A673 (cell line): ENCODE measurements at regions of chr3 and their contacts with region 1.

Region 1: DNA sequence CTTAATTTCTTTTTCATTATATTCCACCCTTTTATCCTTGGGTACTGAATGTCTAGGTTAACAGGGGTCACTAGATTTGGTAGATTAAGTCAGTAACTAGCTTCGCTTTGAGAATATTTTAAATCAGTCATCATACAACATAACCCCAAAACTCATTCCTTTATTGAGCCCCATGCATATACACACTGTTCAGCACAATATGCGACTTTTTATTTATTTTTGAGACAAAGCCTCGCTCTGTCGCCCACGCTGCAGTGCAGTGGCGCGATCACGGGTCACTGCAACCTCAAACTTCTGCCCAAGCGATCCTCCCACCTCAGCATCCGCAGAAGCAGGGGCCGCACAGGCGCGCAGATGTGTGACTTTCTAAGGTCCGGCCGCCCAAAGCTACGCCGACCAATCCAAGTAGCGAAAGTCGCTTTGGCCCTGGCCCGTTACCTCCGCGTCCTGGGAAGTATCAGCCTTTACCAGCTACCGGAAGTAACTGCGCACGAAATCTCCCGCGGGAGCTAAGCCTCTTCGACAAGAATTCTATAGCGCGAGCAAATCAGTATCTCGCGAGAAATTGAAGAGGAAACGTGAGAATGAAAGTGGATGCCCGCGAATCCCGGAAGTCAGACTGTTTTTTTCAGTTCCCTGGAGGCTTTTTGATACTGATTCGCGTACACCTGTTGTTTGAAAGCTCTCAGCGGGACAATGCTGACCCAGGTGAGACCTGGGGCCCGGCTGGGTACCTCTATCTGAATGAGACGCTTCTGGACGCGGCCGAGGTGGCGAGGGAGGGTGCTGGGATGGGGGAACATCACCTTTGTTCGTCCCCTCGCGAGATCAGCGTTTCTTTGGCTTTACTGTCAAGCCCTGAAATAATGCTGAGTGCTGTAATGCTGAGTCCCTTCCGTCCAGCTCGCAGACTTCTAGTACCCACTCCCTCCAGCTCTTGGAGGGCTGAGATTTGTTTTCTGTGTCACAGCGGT is at the starts of genes DHFR2 and NSUN3:
- DNase-seq: peak; percentile 98
- H3K4me3 ChIP-seq: peak within 1 kb of the TSS; percentile 84
- H3K27ac ChIP-seq: peak within 1 kb of the TSS; percentile 97
- H3K4me1 ChIP-seq: peaks cover 14% of the 10 kb centered on the region
- H3K27me3 ChIP-seq: no peaks in the 10 kb centered on the region
- CTCF ChIP-seq: no peak
- total RNA-seq, gene DHFR2: 6.5 and 9.8 TPM in 2 replicates
- total RNA-seq, gene NSUN3: 12.3 and 15.6 TPM in 2 replicates

Region 2: DNA sequence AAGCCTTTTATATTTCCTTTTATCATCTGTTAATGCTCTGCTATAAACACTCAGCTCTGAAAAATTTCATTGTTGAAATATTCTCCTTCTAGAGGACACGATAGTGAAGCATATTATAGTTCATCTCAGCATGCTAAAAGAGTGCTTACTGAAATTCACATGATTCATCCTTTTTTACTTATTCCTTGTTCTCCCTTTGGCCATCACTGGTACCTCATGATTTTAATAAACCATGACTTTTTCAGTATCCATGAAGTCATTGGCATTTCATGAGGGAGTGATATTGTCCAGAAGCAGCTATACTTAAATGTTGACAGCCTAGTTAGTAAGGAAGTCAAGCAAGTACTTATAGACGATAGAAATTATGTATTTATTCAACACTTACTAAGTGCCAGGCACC is 201.7 kb before region 1 on chr3:
- CTCF ChIA-PET with region 1: no interaction called
- POLR2A ChIA-PET with region 1: no interaction called
- intact Hi-C with region 1: loop called (anchors 5 kb)
- DNase-seq: no peak
- H3K4me3 ChIP-seq: no peak overlapping the region
- H3K27ac ChIP-seq: no peak overlapping the region
- H3K4me1 ChIP-seq: peaks cover 7% of the 10 kb centered on the region
- H3K27me3 ChIP-seq: peaks cover 29% of the 10 kb centered on the region
- CTCF ChIP-seq: no peak

Region 3: GRCh38 chr3:94004301-94004910 is 58.3 kb before region 1 on chr3:
- CTCF ChIA-PET with region 1: no interaction called
- POLR2A ChIA-PET with region 1: no interaction called
- intact Hi-C with region 1: loop called (anchors 2 kb)
- DNase-seq: peak; percentile 79
- H3K4me3 ChIP-seq: no peak overlapping the region
- H3K27ac ChIP-seq: no peak overlapping the region
- H3K4me1 ChIP-seq: peaks cover 16% of the 10 kb centered on the region
- H3K27me3 ChIP-seq: no peaks in the 10 kb centered on the region
- CTCF ChIP-seq: peak; percentile 92

Region 4: DNA sequence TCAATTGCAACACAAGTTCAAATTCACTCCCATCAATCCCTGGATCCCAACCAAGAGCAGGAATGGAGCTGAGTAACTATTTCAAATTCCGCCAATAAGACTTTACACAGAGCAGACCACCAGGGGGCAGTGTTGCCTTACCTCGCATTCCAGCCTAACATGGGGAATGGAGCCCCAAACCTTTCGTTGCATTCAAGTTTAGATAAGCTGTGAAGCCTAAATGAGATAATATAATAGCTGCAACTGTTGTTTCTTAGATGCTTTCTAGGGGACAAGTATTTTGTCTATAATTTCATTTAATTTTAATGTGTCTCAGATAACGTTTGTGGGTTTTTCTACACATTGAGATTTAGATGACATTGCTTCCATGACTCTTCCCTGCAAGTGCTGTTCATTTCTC is 186.9 kb after region 1 on chr3:
- CTCF ChIA-PET with region 1: no interaction called
- POLR2A ChIA-PET with region 1: no interaction called
- intact Hi-C with region 1: no loop called
- DNase-seq: peak; percentile 80
- H3K4me3 ChIP-seq: no peak overlapping the region
- H3K27ac ChIP-seq: no peak overlapping the region
- H3K4me1 ChIP-seq: peaks cover 9% of the 10 kb centered on the region
- H3K27me3 ChIP-seq: peaks cover 6% of the 10 kb centered on the region
- CTCF ChIP-seq: peak; percentile 95